ENCODE measurements at regions of chr11 and their contacts with region 1.

Region 1: DNA sequence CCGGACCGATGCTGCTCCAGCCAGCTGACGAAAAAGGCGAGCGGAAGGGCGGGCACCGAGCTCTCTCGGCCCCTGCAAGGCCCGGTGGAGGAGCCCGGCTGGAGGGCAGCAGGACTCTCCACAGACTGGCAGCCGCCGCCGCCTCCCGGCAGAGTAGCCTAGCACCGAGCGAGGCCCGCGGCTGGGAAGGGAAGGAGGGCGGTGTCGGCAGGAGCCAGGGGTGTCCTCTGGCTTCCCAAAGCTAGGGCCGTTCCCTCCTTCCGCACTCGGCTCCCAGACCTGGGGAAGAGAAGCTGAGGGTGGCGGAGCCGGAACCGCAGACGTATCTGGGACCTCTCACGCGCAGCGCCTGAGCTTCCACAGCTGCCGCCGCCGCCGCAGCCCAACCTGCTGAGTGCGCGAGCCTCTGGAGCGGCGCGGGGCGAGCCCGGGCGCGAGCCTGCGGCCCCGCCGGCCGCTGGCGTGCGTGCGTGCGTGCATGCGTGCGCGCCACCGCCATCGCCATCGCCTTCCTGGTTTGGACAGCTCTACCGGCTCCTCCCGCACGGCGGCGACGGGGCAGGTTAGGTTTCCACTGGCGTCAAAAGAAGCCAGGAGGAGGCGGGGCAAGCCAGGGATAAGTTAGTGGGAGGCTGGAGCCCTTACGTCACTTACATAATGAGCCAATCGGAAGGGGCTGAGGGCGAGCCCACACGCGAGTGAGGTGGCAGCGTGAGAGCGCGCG is at the start of gene RAB6A:
- DNase-seq: peak; percentile 100
- ATAC-seq: peak; percentile 95
- H3K4me3 Mint-ChIP-seq: peak within 1 kb of the TSS; percentile 85
- H3K27ac Mint-ChIP-seq: peak within 1 kb of the TSS; percentile 87
- H3K4me1 Mint-ChIP-seq: peaks cover 24% of the 10 kb centered on the region
- H3K27me3 Mint-ChIP-seq: no peaks in the 10 kb centered on the region
- total RNA-seq, gene RAB6A: 97.7 to 101 TPM

Region 2: GRCh38 chr11:73554671-73555320 is 206.0 kb before region 1 on chr11:
- CTCF ChIA-PET with region 1: no interaction called
- POLR2A ChIA-PET with region 1: no interaction called
- DNase-seq: no peak
- ATAC-seq: no peak
- H3K4me3 Mint-ChIP-seq: no peak overlapping the region
- H3K27ac Mint-ChIP-seq: no peak overlapping the region
- H3K4me1 Mint-ChIP-seq: peaks cover 14% of the 10 kb centered on the region
- H3K27me3 Mint-ChIP-seq: no peaks in the 10 kb centered on the region

Region 3: DNA sequence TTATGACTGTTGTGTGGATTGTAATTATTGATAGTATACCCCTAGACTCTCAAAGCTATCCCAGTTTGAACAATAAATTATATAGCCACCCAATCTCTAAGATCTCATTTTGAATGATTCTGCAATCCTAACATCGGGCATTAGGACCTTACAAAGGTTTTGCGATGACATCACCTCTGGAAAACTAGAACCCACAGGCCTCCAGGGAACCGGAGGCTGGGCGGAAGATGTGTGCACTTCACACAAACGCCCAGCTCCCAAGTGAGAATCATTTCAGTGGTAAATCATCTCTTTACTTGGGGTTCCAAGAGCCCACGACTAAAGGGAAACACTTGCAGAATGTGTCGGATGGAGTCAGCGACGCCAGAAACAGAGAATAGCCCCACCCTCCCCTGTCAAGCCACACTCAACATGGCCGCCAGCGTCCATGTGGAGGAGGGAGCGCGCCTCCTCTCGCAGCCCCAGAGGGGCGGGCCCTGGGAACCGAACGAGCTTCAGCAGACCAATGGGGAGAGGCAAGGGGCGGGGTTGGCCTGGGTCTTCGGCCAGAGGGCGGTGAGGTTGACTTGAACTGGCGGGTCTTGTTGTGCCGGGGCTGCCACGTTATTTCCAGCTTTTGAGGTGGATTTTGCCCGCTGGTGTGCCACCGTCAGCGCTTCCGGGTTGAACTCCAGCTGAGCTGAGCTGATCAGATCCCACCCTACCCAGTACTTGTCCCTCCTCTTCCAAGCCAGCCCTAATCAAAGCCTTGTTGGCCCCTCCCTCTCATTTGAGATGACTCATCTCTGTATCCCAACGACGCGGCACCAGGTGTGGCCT is 18.5 kb after region 1 on chr11:
- CTCF ChIA-PET with region 1: interaction called, 26 read pairs
- POLR2A ChIA-PET with region 1: interaction called, 44 read pairs
- DNase-seq: peak; percentile 99
- ATAC-seq: peak; percentile 99
- H3K4me3 Mint-ChIP-seq: peak overlapping the region; percentile 83
- H3K27ac Mint-ChIP-seq: peak overlapping the region; percentile 100
- H3K4me1 Mint-ChIP-seq: peaks cover 21% of the 10 kb centered on the region
- H3K27me3 Mint-ChIP-seq: peaks cover 3% of the 10 kb centered on the region

Region 4: GRCh38 chr11:73787643-73788537 is 27.0 kb after region 1 on chr11 and contains the start of gene MRPL48:
- CTCF ChIA-PET with region 1: interaction called, 5 read pairs
- POLR2A ChIA-PET with region 1: interaction called, 15 read pairs
- DNase-seq: peak; percentile 93
- ATAC-seq: peak; percentile 100
- H3K4me3 Mint-ChIP-seq: peak within 1 kb of the TSS; percentile 100
- H3K27ac Mint-ChIP-seq: peak within 1 kb of the TSS; percentile 100
- H3K4me1 Mint-ChIP-seq: peaks cover 45% of the 10 kb centered on the region
- H3K27me3 Mint-ChIP-seq: no peaks in the 10 kb centered on the region
- total RNA-seq, gene MRPL48: 45.1 to 46.0 TPM

Measured in activated CD8-positive, alpha-beta T cell treated with anti-CD3 and anti-CD28 coated beads, Interleukin-2, amount 10 ng/mL, durations not matched to agents 7 days and 5 days (primary cell).